HEK293 (cell line): ENCODE measurements at regions of chr11 and their contacts with region 1.

Region 1: DNA sequence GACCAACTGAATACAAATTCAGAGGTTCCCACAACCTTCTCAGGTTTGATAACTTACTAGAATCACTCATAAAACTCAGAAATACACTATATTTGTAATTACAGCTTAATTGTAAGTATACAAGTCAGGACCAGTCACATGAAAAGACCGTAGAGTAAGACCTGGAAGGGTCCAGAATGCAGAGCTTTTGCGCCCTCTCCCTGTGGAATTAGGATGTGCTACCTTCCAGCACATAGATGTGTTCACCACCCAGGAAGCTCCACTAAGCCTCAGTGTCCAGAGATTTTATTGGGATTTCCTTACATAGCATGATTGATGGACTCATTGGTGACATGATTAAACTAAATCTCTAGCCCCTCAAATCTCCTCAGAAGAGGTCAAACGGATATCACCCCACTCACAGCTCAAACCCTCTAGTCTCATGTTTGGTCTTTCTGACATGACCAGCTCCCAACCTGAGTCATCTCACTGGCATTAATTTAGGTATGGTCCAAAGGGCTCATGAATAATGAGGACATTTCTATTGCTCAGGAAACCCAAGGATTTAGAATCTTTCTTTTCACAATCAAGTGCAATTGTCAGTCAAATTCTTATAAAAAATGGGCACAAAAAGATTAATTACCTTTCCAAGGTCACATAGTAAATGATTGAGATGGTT is 77.2 kb upstream of the UBASH3B start:
- H3K4me3 ChIP-seq: no peak overlapping the region
- H3K27ac ChIP-seq: no peak overlapping the region
- H3K4me1 ChIP-seq: no peaks in the 10 kb centered on the region
- CTCF ChIP-seq: no peak

Region 2: DNA sequence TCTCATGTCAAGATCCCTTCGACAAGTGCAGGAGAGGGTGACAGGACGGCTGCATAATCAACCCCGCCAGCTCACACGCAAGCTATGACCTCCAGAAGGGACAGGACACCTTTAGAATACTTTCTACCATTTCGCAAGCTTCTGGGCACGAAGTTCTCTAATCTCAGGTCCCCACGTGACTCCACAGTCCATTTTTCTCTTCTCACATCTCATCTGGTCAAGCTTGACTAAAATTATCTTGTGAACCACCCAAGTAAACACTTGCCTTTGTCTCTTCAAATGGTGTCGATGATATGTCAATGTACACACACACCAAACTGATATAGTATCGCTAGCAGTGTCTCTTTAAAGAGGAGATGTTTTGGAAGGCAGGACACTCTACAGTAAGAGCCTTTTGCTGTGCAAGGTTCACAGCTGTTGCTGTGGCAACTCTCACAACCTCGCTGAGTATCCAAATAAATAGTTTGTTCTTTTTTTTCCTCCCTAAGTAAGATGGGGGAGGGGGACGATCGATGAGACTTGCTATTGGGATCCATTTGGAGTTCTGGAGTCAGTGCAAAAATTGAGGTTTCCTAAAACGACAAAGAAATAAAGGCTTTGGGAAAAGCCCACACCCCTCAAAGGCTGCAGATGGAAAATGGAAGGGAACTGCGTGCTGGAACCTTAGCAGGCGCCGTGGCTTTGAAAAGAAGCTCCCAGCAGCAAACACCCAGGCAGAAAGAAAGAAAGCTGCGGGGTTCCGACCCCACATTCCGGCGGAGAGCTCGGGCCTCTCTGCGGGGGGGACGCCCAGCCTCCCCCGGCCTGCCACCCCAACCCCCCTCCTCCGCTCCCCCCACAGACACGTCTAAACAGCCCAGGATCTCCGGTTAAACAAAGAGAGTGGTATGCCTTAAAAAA is 138.1 kb before region 1 on chr11:
- CTCF ChIA-PET with region 1: no interaction called
- POLR2A ChIA-PET with region 1: no interaction called
- H3K4me3 ChIP-seq: peak overlapping the region; percentile 39
- H3K27ac ChIP-seq: no peak overlapping the region; the same call in 1 of the 2 replicates
- H3K4me1 ChIP-seq: peaks cover 3% of the 10 kb centered on the region; the same call in 1 of the 2 replicates
- CTCF ChIP-seq: no peak

Region 3: DNA sequence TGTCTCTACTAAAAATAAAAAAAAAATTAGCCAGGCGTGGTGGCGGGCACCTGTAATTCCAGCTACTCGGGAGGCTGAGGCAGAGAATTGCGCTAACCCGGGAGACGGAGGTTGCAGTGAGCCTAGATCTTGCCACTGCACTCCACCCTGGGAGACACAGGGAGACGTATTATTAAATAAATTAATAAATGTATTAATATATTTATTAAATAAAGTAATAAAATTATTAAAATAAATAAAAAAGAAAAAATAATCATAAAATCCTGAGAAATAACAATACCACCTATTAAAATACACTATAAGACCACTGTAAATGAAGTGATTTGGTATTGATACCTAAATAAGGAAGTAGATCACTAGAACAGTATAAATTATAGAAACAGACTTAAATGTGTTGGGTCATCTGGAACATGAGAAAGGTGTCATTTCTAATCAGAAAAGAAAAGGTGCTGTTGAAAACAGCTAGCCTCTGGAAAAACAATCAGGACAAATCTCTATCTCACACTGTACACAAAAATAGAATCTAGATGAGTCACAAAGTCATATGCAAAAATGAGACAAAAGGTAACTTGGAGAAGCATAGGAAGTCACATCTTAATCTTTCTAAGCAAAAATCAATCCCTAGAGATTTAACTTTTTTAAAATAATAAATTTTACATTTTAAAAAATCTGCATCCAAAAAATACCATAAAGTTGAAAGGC is 34.0 kb after region 1 on chr11:
- CTCF ChIA-PET with region 1: interaction called, 11 read pairs
- POLR2A ChIA-PET with region 1: no interaction called
- H3K4me3 ChIP-seq: no peak overlapping the region
- H3K27ac ChIP-seq: no peak overlapping the region
- H3K4me1 ChIP-seq: no peaks in the 10 kb centered on the region
- CTCF ChIP-seq: no peak

Region 4: DNA sequence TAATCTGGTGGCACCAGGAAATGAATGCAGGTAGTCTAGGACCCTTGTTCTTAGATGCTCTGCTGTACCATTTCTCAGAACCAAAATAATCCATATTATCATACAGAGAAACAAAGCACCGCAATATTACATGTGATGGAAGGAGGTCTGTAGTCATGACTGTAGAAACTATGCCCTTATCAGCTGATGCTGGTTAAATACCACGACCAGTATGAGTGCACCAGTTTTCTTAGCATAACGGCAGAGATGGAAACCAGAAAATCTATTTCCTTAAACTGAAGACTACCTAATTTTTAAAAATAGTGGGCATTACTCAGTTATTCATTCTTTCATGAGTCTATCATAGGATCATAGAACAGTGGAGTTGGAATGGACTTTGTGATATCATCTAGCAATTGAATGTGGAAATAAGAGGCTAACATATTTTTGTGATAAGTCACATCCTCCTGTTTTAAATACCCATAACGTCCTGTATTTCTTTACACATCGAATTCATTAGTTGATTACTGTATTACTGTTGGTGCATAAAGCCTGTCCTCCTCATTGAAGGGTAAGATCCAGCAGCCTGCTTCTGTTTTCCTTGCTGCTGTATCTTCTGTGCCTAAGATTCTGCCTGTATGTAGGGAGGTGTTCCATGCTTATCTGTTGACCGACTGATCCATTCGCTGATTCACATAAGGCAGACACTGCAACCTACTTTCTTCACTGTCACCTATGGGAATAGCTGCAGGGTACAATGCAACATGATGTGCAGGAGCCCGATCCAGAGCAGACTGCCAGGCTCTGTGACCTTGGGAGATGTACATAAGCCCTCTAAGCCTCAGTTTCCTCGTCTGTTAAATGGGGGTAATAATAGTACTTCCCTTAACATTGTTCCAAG is 319.5 kb after region 1 on chr11:
- CTCF ChIA-PET with region 1: no interaction called
- POLR2A ChIA-PET with region 1: no interaction called
- H3K4me3 ChIP-seq: no peak overlapping the region
- H3K27ac ChIP-seq: no peak overlapping the region
- H3K4me1 ChIP-seq: no peaks in the 10 kb centered on the region
- CTCF ChIP-seq: no peak